GM10248 (cell line): ENCODE measurements at regions of chr16 and their contacts with region 1.

Region 1: DNA sequence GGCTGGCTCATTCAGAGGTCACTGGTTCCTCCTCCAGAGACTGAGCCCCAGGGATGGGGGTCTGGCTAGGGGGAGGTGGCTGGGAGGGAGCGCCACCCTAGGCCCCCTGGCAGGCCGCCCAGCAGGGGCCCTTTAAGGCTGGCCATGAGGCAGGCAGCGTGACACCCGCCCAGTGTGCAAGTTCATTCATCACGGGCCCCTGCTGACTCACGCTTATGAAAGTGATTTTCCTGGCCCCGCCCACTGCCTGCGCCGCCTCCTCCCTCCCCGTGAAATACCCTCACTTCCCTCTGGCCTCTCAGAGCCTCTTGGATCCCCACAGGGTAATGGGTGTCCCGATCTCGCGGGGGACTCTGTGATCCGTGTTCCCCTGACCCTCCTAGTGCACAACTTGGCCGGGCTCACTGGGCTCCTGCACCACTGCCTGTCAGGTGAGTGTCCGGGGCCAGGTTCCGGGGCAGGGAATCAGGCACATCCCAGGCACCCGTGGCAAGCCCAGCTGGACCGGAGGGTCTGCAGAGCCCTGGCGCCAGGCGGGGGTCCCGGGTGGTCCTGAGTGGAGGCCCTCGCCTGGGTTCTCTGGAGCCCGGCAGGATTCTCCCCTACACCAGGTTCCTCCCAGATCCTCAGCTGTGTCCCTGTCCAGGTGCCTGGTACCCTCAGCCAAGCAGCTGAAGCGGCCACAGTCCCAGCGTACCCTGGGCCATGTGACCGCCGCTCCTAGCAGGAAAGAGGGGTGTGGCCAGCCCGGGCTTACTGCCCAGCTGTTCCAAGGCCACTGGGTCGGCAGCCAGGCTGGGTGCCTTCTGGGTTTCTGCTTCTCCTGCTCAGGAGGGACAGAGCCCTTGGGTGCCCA is at the start of gene OSGIN1:
- DNase-seq: peak; percentile 88
- CTCF ChIP-seq: no peak

Region 2: GRCh38 chr16:83807710-83808572 is 145.2 kb before region 1 on chr16 and contains the start of gene HSBP1:
- CTCF ChIA-PET with region 1: no interaction called
- POLR2A ChIA-PET with region 1: no interaction called
- DNase-seq: peak; percentile 98
- CTCF ChIP-seq: no peak

Region 3: GRCh38 chr16:83926726-83927397 is 26.3 kb before region 1 on chr16:
- CTCF ChIA-PET with region 1: interaction called, 17 read pairs
- POLR2A ChIA-PET with region 1: no interaction called
- DNase-seq: peak; percentile 84
- CTCF ChIP-seq: peak; percentile 98

Region 4: DNA sequence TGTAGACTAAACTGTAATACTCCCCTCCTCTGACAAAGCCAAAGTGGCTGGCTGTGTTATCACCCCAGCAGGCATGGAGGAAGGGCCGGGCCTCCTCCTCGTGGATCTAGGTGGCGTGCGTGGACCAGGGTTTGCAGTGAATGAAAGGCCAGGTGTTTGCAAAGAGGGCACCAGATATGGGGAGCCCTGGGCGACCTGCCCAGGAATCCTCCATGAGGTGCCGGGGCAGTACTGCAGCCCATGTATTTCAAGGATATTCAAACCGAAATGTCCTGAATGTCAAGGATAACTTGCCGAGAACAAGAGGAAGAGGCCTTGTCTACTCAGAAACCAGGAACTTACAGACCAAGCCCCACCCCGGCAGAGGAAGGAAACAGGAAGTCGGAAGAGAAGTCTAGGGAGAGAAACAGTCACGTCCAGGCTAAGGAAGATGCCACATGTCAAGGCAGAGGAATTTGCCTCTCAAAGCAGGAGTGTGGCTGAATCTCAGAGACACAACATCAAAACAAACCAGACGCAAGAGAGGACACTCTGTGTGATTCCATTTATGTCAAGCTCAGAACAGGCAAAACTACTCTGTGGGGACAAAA is 13.8 kb before region 1 on chr16:
- CTCF ChIA-PET with region 1: interaction called, 11 read pairs
- POLR2A ChIA-PET with region 1: no interaction called
- DNase-seq: no peak
- CTCF ChIP-seq: no peak

Region 5: DNA sequence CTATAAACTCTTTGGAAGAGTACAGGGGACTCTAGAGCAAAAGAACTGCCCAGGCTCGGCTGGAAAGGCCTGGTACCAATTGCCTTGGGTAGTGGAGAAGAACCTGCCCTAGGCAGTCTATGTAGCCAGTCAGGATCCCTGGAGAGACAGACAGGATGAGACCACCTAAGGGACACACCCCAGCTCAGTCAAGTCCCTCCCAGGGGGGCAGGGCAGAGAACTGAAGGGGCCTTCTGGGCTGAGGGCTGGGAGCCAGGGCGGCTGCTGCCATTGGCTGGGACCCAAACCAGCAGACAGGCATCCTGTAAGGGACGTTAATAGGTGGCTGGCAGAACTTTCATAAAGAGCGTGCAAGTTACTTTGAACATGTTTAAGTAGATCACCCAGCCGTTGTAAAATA is 102.2 kb after region 1 on chr16:
- CTCF ChIA-PET with region 1: interaction called, 18 read pairs
- POLR2A ChIA-PET with region 1: no interaction called
- DNase-seq: no peak
- CTCF ChIP-seq: no peak

Region 6: DNA sequence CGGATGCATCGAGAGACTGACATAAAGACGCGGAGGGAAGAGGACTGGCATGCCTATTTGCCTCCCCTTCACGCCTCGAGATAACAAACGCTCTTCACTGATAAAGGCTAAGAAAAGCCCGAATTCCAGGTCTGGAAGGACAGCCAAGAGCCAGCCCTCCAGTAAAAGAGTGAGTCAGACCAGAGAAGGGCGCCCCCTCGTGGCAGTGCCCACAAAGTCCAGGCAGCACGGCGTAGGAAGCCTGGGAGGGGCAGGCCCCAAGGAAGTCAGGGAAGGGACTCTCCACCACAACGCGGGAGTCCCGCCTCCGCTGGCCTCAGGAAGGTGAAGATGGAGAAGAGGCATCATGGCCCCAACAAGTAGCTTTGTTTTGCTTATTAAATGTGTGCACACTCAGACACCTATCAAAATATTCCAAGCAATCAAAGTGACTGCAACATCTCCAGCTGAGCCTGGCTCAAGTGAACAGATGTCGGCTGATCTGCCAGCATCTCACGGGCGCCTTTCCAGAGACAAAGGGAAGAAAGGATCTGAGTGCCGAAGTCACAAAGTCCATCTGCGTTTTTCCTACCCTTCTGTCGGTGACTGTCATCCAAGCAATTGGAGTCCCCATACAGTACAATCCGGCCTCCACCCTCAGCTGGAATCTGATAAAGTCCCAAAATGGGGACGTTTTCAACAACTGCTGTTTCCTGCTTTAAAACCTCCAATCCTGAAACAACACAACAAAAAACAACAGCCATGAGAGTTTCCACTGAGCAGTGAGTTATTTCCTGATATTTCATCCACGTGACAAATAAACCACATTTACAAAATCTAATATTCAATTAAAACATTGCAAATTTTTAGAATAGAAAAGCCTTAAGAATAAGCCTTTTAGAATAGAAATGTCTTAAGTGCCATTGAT is 109.8 kb after region 1 on chr16:
- CTCF ChIA-PET with region 1: interaction called, 74 read pairs
- POLR2A ChIA-PET with region 1: no interaction called
- DNase-seq: peak; percentile 65
- CTCF ChIP-seq: peak; percentile 54